T-cell (primary cell): ENCODE measurements at regions of chr10 and their contacts with region 1.

Region 1: GRCh38 chr10:69327463-69328379 is 49.4 kb downstream of the HK1 start:
- DNase-seq: peak in 21 of 35 experiments; percentile 8 to 57 (median 35)
- ATAC-seq: peak; percentile 81 to 93 (median 85)
- H3K4me3 ChIP-seq: peak overlapping the region; percentile 35 to 66
- H3K4me3 Mint-ChIP-seq: peak overlapping the region; percentile 70 to 79 (median 72)
- H3K27ac ChIP-seq: peak overlapping the region; percentile 70
- H3K27ac Mint-ChIP-seq: peak overlapping the region; percentile 82 to 92
- H3K4me1 ChIP-seq: peaks cover 34 to 54% of the 10 kb centered on the region in 2 experiments
- H3K4me1 Mint-ChIP-seq: peaks cover 76 to 82% (median 81%) of the 10 kb centered on the region in 3 donors
- H3K27me3 ChIP-seq: no peaks in the 10 kb centered on the region
- H3K27me3 Mint-ChIP-seq: no peaks in the 10 kb centered on the region

Region 2: GRCh38 chr10:69403519-69403918 is 75.8 kb after region 1 on chr10:
- CTCF ChIA-PET with region 1: no interaction called
- POLR2A ChIA-PET with region 1: interaction called in 1 of 2 experiments, 10 read pairs
- DNase-seq: no peak
- ATAC-seq: no peak
- H3K4me3 ChIP-seq: no peak overlapping the region
- H3K4me3 Mint-ChIP-seq: no peak overlapping the region
- H3K27ac ChIP-seq: no peak overlapping the region
- H3K27ac Mint-ChIP-seq: peak overlapping the region in 1 of 2 donors; percentile 64
- H3K4me1 ChIP-seq: peaks cover 0 to 12% of the 10 kb centered on the region in 2 experiments
- H3K4me1 Mint-ChIP-seq: peaks cover 9 to 19% (median 12%) of the 10 kb centered on the region in 3 donors
- H3K27me3 ChIP-seq: no peaks in the 10 kb centered on the region
- H3K27me3 Mint-ChIP-seq: no peaks in the 10 kb centered on the region

Region 3: DNA sequence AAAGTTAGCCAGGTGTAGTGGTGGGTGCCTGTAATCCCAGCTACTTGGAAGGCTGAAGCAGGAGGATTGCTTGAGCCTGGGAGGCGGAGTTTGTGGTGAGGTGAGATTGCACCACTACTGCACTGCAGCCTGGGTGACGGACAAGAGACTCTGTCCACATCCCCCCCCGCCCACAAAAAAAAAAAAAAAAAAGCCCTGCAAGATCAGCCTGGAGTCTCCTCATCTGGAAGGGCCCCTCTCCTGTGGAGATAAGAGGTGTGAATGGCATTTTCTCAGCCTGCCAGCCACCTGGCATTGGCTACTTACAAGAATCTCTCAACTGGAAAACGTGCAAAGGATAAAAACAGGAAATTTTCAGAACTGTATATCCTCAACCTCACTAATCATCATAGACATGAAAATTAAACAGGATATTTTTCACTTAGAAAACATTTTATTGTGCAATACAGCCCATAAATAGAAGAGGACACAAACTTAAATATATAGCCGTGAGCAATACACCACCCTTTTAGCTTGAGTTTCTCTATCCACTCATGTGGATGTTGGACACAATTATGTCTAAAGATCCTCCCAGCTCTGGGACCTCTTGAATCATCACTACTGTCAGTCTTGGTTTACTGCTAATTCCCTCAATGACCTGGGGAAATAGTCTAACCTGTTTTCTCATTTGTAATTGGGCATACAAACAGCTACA is 112.2 kb after region 1 on chr10:
- CTCF ChIA-PET with region 1: no interaction called
- POLR2A ChIA-PET with region 1: no interaction called
- DNase-seq: no peak
- ATAC-seq: no peak
- H3K4me3 ChIP-seq: no peak overlapping the region
- H3K4me3 Mint-ChIP-seq: no peak overlapping the region
- H3K27ac ChIP-seq: no peak overlapping the region
- H3K27ac Mint-ChIP-seq: no peak overlapping the region
- H3K4me1 ChIP-seq: no peaks in the 10 kb centered on the region
- H3K4me1 Mint-ChIP-seq: no peaks in the 10 kb centered on the region
- H3K27me3 ChIP-seq: peaks cover 0 to 38% of the 10 kb centered on the region in 2 experiments
- H3K27me3 Mint-ChIP-seq: peaks cover 9 to 19% of the 10 kb centered on the region in 2 donors